H1 (cell line): ENCODE measurements at regions of chr1 and their contacts with region 1.

Region 1: DNA sequence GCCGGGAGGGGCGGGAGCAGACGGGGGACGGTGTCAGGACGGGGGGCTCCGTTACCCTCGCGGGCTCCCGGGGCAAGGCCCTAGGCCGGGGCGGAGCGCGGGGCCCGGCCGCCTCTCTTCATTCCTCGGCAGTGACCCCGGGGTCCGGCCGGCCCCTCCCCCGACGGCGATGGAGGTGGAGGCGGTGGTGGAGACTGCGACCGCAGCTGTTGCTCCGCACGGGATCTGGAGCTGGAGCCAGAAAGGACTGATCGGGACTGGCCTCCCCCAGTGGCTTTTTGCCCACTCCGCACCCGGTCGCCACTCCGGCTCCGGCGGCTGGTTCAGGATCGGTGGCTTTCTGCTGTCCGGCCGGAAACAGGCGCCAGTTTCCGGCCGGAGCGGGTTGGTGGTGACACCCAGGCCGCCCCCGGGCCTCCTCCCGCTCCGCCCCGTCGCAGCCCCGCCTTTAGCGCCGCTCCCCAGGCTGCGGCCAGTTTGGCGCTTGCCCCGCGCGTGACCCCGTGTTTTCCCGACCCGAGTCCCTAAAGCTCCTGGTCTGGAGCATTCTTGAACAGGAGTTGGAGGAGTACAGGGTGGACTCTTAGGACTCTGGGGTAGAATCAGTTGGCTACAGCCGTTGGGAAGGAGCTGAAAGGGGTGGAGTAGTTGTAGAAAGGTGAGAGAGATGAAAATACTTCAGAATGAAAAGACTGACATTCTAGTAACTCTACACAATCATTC is at the start of gene OTUD7B:
- DNase-seq: peak; percentile 54 to 88
- H3K4me3 ChIP-seq: peak within 1 kb of the TSS; percentile 93 to 98 (median 94)
- H3K27ac ChIP-seq: peak within 1 kb of the TSS; percentile 65
- H3K4me1 ChIP-seq: peaks cover 0 to 8% (median under 1%) of the 10 kb centered on the region in 4 experiments; a peak in 2 of 7 replicates
- H3K27me3 ChIP-seq: no peaks in the 10 kb centered on the region
- CTCF ChIP-seq: peak in 1 of 3 experiments; percentile 34; a peak in 2 of 4 replicates
- EP300 ChIP-seq: peak in 1 of 2 experiments; percentile 92; a peak in 1 of 3 replicates
- POLR2A ChIP-seq: peak in 1 of 2 experiments; percentile 89; a peak in 2 of 3 replicates
- RAD21 ChIP-seq: no peak; a peak in 1 of 4 replicates
- total RNA-seq, gene OTUD7B: 21.5 and 22.0 TPM in 2 replicates

Region 2: GRCh38 chr1:149927503-149928387 is 82.8 kb before region 1 on chr1 and contains the start of gene SF3B4:
- CTCF ChIA-PET with region 1: no interaction called
- POLR2A ChIA-PET with region 1: interaction called, 11 read pairs
- DNase-seq: peak in 1 of 2 experiments; percentile 92
- H3K4me3 ChIP-seq: peak within 1 kb of the TSS; percentile 85 to 95 (median 94)
- H3K27ac ChIP-seq: peak within 1 kb of the TSS; percentile 90
- H3K4me1 ChIP-seq: peaks cover 0 to 8% (median 4%) of the 10 kb centered on the region in 4 experiments; a peak in 4 of 7 replicates
- H3K27me3 ChIP-seq: no peaks in the 10 kb centered on the region
- CTCF ChIP-seq: no peak
- EP300 ChIP-seq: no peak
- POLR2A ChIP-seq: peak; percentile 92 to 93
- RAD21 ChIP-seq: 0 out of 4 replicates have a peak, but pooled peaks of 1 of the 2 experiments have one; percentile 5
- total RNA-seq, gene SF3B4: 119 and 122 TPM in 2 replicates

Region 3: DNA sequence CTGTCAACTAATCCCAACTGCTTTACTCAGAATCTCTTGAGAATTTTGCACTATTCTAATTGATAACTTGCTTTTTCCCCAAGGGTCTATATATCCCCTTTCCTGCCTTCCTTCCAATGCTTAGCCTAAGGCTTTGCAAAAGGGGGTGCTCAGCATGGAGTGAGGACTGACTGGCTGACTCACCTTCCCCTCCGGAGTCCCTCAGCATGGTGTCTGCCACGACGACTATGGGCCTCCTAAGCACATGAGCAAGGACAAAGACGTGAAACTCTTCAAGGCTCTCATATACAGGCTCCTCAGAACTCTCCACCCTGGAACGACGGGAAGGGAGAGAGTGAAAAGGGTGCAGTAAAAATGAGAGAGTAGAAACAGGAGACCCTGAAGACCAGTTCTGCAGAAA is 60.6 kb before region 1 on chr1:
- CTCF ChIA-PET with region 1: no interaction called
- POLR2A ChIA-PET with region 1: no interaction called
- DNase-seq: no peak
- H3K4me3 ChIP-seq: no peak overlapping the region
- H3K27ac ChIP-seq: no peak overlapping the region
- H3K4me1 ChIP-seq: no peaks in the 10 kb centered on the region
- H3K27me3 ChIP-seq: no peaks in the 10 kb centered on the region
- CTCF ChIP-seq: no peak
- EP300 ChIP-seq: no peak
- POLR2A ChIP-seq: no peak
- RAD21 ChIP-seq: no peak

Region 4: DNA sequence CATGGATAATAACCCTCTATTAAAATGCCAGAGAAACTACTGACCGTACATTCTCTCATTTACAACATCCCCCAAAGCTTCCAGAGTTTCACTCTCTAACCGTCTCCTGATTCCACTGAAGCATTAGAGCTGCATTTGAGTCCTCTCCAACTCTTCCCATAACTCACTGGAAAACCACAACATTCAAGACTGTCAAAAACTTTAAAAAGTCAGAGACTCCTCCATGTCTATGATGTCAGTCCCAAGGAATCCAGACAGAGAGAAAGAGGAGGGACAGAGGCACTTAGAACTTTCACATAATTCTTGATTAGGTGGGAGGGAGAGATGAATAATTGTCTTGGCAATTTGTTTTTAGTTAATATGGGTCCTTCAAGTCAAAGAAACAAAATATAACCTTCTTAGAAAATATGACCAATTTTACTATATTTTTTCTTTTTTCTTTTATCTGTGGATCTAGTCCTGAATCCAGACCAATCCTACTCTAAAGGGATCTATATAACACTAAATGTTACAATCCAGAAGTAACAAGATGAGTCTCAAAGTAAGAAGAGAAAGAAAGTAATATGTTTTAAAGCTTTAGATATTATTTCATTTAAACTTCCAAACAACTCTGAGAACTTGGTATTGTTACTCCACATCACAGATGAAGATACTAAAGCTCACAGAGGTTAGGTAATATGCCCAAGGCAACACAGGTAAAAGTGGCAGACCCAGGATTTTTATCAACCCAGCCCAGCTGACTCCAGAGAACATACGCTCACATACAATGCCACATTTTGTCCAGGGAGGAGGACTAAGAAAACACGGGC is 23.9 kb before region 1 on chr1:
- CTCF ChIA-PET with region 1: no interaction called
- POLR2A ChIA-PET with region 1: no interaction called
- DNase-seq: no peak
- H3K4me3 ChIP-seq: no peak overlapping the region
- H3K27ac ChIP-seq: no peak overlapping the region
- H3K4me1 ChIP-seq: no peaks in the 10 kb centered on the region
- H3K27me3 ChIP-seq: no peaks in the 10 kb centered on the region
- CTCF ChIP-seq: no peak
- EP300 ChIP-seq: no peak
- POLR2A ChIP-seq: no peak
- RAD21 ChIP-seq: no peak

Region 5: GRCh38 chr1:149997585-149998262 is 12.8 kb before region 1 on chr1:
- CTCF ChIA-PET with region 1: interaction called, 3 read pairs
- POLR2A ChIA-PET with region 1: interaction called, 14 read pairs
- DNase-seq: no peak
- H3K4me3 ChIP-seq: no peak overlapping the region
- H3K27ac ChIP-seq: no peak overlapping the region
- H3K4me1 ChIP-seq: peaks cover 0 to 10% (median 5%) of the 10 kb centered on the region in 4 experiments; a peak in 4 of 7 replicates
- H3K27me3 ChIP-seq: no peaks in the 10 kb centered on the region
- CTCF ChIP-seq: no peak
- EP300 ChIP-seq: no peak
- POLR2A ChIP-seq: no peak
- RAD21 ChIP-seq: no peak

Region 6: GRCh38 chr1:150021191-150021694 is 10.7 kb after region 1 on chr1:
- CTCF ChIA-PET with region 1: interaction called, 4 read pairs
- POLR2A ChIA-PET with region 1: interaction called, 21 read pairs
- DNase-seq: no peak
- H3K4me3 ChIP-seq: no peak overlapping the region
- H3K27ac ChIP-seq: no peak overlapping the region
- H3K4me1 ChIP-seq: no peaks in the 10 kb centered on the region; a peak in 1 of 7 replicates
- H3K27me3 ChIP-seq: no peaks in the 10 kb centered on the region
- CTCF ChIP-seq: no peak
- EP300 ChIP-seq: no peak
- POLR2A ChIP-seq: no peak
- RAD21 ChIP-seq: no peak

Region 7: DNA sequence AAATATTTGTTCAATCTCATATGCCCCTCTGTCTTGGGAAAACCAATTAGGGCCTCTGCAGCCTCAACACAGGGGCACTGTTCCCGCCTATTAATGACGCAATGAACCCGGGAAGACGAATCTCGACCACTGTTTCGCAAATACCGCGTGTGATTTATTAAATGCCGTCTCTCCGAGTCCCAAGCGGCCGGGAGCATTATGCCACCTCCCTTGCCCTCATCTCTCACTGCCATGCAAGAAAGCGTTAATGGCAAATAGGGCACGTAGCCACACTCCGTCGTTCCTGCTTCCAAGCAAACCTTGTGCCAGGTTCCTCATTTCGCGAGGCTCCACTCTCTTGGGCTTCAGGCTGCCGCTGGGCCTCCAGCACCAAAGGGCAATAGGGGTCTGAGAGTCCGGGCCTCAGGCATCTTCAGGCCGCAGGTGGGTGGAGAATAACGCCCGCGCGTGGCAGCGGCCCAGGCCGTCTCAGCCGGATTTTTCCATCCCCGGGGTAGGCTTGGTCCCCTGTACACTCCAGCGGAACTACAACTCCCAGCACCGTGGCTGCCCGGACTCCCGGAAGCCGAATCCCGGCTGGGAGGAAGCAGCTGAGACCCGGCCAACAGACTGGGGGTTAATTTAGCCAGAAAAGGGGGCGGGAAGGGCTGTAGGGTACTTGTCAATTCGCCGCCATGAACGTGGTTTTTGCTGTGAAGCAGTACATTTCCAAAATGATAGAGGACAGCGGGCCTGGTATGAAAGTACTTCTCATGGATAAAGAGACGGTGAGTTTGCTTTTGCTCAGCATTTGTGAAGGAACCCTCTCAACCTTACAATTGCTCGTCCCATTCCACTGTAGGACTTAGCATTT is 56.9 kb after region 1 on chr1 and contains the start of gene VPS45:
- CTCF ChIA-PET with region 1: no interaction called
- POLR2A ChIA-PET with region 1: interaction called, 24 read pairs
- DNase-seq: peak; percentile 67 to 90
- H3K4me3 ChIP-seq: peak within 1 kb of the TSS; percentile 81 to 95 (median 91)
- H3K27ac ChIP-seq: peak within 1 kb of the TSS; percentile 93
- H3K4me1 ChIP-seq: no peaks in the 10 kb centered on the region
- H3K27me3 ChIP-seq: no peaks in the 10 kb centered on the region
- CTCF ChIP-seq: no peak
- EP300 ChIP-seq: no peak
- POLR2A ChIP-seq: no peak; a peak in 2 of 3 replicates
- RAD21 ChIP-seq: no peak
- total RNA-seq, gene VPS45: 27.6 and 29.9 TPM in 2 replicates

Region 8: DNA sequence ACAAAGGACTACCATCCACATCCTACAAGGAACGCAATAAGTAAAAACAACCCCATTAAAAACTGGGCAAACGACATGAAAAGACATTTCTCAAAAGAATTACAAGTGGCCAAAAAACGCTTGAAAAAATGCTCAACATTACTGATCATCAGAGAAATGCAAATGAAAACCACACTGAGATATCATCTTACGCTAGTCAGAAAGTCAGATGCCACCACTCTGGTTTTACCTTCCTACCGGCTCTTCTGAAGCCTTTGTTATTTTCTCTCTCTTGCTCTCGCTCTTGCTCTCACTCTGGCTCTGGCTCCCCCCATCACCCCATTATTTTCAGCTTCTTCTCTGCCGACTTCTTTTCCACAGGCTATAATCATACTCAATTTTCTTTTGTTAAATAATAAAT is 95.8 kb after region 1 on chr1:
- CTCF ChIA-PET with region 1: no interaction called
- POLR2A ChIA-PET with region 1: no interaction called
- DNase-seq: no peak
- H3K4me3 ChIP-seq: no peak overlapping the region
- H3K27ac ChIP-seq: no peak overlapping the region
- H3K4me1 ChIP-seq: no peaks in the 10 kb centered on the region
- H3K27me3 ChIP-seq: no peaks in the 10 kb centered on the region
- CTCF ChIP-seq: no peak
- EP300 ChIP-seq: no peak
- POLR2A ChIP-seq: no peak
- RAD21 ChIP-seq: no peak